Left cardiac atrium (tissue), 4 donors: ENCODE measurements at regions of chr4 and their contacts with region 1.

Region 1: DNA sequence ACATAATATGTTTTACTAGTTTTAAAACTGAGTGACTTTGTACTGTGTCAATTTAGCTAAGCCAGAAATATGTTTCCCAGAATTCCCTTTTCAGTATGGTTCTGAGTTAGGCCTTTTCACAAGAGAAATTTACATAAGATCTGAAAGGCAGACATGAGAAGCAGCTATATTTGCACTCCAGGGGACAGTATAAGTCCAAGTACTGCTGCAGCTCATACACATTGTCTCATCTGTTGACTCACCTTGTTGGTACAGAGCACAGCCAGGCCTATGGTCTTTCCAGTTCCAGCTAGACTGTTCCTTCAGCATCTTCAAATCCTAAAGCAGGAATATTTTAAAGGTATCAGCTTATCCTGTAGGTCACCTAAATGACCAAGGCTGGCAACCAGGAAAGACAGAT is 53.5 kb downstream of the BMP3 start:
- DNase-seq: no peak
- ATAC-seq: no peak

Region 2: DNA sequence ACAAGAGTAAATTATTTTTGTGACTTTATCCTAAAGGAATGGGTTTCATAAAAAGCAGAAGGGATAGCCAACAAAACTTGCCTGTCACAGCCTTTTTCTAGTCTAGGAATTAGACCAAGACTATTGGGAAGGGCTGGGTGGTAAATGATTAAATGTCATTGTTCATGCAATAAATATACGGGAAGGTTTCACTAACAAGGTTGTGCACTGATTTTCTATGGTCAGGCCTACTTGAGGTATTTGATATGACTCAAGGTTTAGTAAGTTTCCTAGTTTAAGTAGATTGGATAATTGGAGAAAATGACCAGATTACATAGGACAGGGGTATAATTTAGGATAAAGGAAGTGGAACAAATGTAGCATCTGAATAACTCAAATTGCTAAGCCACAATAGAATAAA is 302.6 kb before region 1 on chr4:
- intact Hi-C with region 1: no loop called
- DNase-seq: no peak
- ATAC-seq: no peak

Region 3: GRCh38 chr4:81351654-81352445 is 267.8 kb after region 1 on chr4:
- intact Hi-C with region 1: loop called in 1 of 2 experiments (anchors 10 kb)
- DNase-seq: peak; percentile 66
- ATAC-seq: peak; percentile 61 to 71